ENCODE measurements at regions of chrX and their contacts with region 1.

Region 1: DNA sequence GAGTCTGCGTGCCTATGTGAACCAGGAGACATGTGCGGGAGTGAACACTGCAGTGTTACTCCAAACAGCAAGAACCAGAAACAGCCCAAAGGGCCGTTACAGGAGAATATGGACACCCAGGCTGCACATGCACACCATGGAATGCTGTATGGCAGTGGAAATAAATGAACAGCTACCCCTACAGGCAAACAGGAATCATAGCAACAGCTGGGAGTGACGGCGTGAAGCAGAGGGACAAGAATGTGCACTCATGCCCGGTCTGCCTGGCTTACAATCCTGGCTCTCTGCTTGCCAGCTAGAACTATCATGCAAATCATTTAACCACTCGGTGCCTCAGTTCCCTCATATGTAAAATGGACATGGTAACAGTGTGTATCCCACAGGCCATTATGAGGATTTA is 16.6 kb downstream of the GPKOW start:
- DNase-seq: peak; percentile 26 to 62
- ATAC-seq: peak; percentile 81 to 92
- H3K4me3 ChIP-seq: no peak overlapping the region
- H3K27ac ChIP-seq: no peak overlapping the region
- H3K4me1 ChIP-seq: peaks cover 7% of the 10 kb centered on the region; the same call in 1 of the 3 replicates
- CTCF ChIP-seq: peak; percentile 28; the same call in 2 of the 3 replicates
- EP300 ChIP-seq: no peak
- POLR2A ChIP-seq: no peak
- RAD21 ChIP-seq: peak; percentile 25 to 33; a peak in 2 of 5 replicates

Region 2: GRCh38 chrX:49089336-49089952 is 17.5 kb before region 1 on chrX:
- CTCF ChIA-PET with region 1: interaction called, 10 read pairs
- POLR2A ChIA-PET with region 1: no interaction called
- DNase-seq: no peak
- ATAC-seq: no peak
- H3K4me3 ChIP-seq: no peak overlapping the region
- H3K27ac ChIP-seq: no peak overlapping the region
- H3K4me1 ChIP-seq: no peaks in the 10 kb centered on the region
- CTCF ChIP-seq: no peak
- EP300 ChIP-seq: no peak
- POLR2A ChIP-seq: no peak
- RAD21 ChIP-seq: no peak

Measured in A549 (cell line).